Sigmoid colon (tissue), 7 donors: ENCODE measurements at regions of chr11 and their contacts with region 1.

Region 1: DNA sequence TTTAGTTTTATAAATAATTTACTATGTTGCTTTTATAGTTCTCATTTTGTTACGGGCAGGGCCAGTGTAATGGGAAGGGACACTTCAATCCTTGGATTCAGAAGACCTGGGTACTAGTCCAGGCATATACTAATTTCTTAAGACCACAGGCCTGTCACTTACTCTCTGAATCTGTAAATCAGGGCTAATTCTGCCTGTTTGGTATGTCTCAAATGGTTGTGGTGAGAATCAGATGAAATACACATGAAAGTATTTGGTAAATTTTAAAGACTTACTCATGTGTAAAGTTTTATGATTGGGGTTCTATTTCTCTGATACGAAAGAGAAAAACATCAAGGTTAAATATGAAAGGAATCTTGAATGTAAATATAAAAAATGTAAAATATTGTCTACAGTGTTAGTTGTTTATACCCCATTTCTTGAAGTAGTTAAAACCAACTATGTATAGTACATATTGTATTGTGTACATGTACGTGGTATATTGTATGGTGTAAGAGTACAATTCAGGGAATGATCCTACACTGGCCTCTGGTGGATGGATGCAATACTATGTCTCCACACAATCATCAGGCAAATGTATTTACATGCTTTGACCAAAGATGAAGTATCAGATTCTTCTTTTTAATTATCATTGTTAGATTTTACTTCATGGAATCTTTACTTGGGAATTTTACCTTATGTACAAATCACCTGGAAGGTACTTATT is 24.5 kb upstream of the RAG2 start:
- DNase-seq: no peak
- H3K4me3 ChIP-seq: no peak overlapping the region
- H3K27ac ChIP-seq: no peak overlapping the region
- H3K4me1 ChIP-seq: peaks cover 0 to 40% (median 24%) of the 10 kb centered on the region in 4 donors
- H3K27me3 ChIP-seq: no peaks in the 10 kb centered on the region
- CTCF ChIP-seq: peak; percentile 40 to 69 (median 55)
- EP300 ChIP-seq: no peak
- POLR2A ChIP-seq: no peak

Region 2: GRCh38 chr11:36672813-36673450 is 50.3 kb after region 1 on chr11:
- intact Hi-C with region 1: loop called (anchors 5 kb)
- DNase-seq: no peak
- H3K4me3 ChIP-seq: no peak overlapping the region
- H3K27ac ChIP-seq: no peak overlapping the region
- H3K4me1 ChIP-seq: no peaks in the 10 kb centered on the region
- H3K27me3 ChIP-seq: no peaks in the 10 kb centered on the region
- CTCF ChIP-seq: peak; percentile 44 to 80 (median 72)
- EP300 ChIP-seq: no peak
- POLR2A ChIP-seq: no peak